GM12878 (cell line): ENCODE measurements at regions of chr6 and their contacts with region 1.

Region 1: GRCh38 chr6:83067448-83068413 is at the start of gene DOP1A:
- DNase-seq: peak; percentile 85
- ATAC-seq: peak; percentile 86
- H3K4me3 ChIP-seq: peak within 1 kb of the TSS; percentile 87
- H3K27ac ChIP-seq: peak within 1 kb of the TSS; percentile 71
- H3K4me1 ChIP-seq: peaks cover 8% of the 10 kb centered on the region
- H3K27me3 ChIP-seq: no peaks in the 10 kb centered on the region
- CTCF ChIP-seq: peak; percentile 93 to 99 (median 96)
- EP300 ChIP-seq: peak; percentile 26 to 44; a peak in 1 of 4 replicates
- POLR2A ChIP-seq: peak; percentile 92
- RAD21 ChIP-seq: peak; percentile 98
- polyA plus RNA-seq, gene DOP1A: 1.9 to 2.9 TPM

Region 2: GRCh38 chr6:82363351-82364086 is 704.2 kb before region 1 on chr6 and contains the start of gene TPBG:
- CTCF ChIA-PET with region 1: no interaction called
- POLR2A ChIA-PET with region 1: no interaction called
- RAD21 ChIA-PET with region 1: no interaction called
- SMC1A ChIA-PET with region 1: no interaction called
- in situ Hi-C with region 1: no loop called
- intact Hi-C with region 1: loop called (anchors 10 kb)
- DNase-seq: no peak
- ATAC-seq: peak; percentile 66
- H3K4me3 ChIP-seq: peak within 1 kb of the TSS; percentile 77
- H3K27ac ChIP-seq: no peak within 1 kb of the TSS; the same call in 1 of the 2 replicates
- H3K4me1 ChIP-seq: no peaks in the 10 kb centered on the region
- H3K27me3 ChIP-seq: peaks cover 3 to 5% of the 10 kb centered on the region in 2 experiments; a peak in 2 of 4 replicates
- CTCF ChIP-seq: peak in 2 of 3 experiments; percentile 15 to 38; a peak in 2 of 6 replicates
- EP300 ChIP-seq: no peak
- POLR2A ChIP-seq: peak; percentile 46
- RAD21 ChIP-seq: 0 out of 2 replicates have a peak, but pooled peaks have one; percentile 10
- polyA plus RNA-seq, gene TPBG: 0.06 to 0.33 TPM

Region 3: GRCh38 chr6:83132121-83132520 is 64.4 kb after region 1 on chr6:
- CTCF ChIA-PET with region 1: interaction called, 18 read pairs
- POLR2A ChIA-PET with region 1: interaction called, 3 read pairs
- RAD21 ChIA-PET with region 1: interaction called, 5 read pairs
- SMC1A ChIA-PET with region 1: interaction called, 17 read pairs
- in situ Hi-C with region 1: no loop called
- intact Hi-C with region 1: no loop called
- DNase-seq: no peak
- ATAC-seq: no peak
- H3K4me3 ChIP-seq: no peak overlapping the region
- H3K27ac ChIP-seq: no peak overlapping the region
- H3K4me1 ChIP-seq: no peaks in the 10 kb centered on the region
- H3K27me3 ChIP-seq: no peaks in the 10 kb centered on the region
- CTCF ChIP-seq: no peak
- EP300 ChIP-seq: no peak
- POLR2A ChIP-seq: no peak
- RAD21 ChIP-seq: no peak

Region 4: GRCh38 chr6:83169511-83169910 is 101.8 kb after region 1 on chr6:
- CTCF ChIA-PET with region 1: interaction called, 63 read pairs
- POLR2A ChIA-PET with region 1: interaction called, 3 read pairs
- RAD21 ChIA-PET with region 1: interaction called, 4 read pairs
- SMC1A ChIA-PET with region 1: interaction called, 9 read pairs
- in situ Hi-C with region 1: no loop called
- intact Hi-C with region 1: no loop called
- DNase-seq: no peak
- ATAC-seq: no peak
- H3K4me3 ChIP-seq: no peak overlapping the region
- H3K27ac ChIP-seq: no peak overlapping the region
- H3K4me1 ChIP-seq: no peaks in the 10 kb centered on the region
- H3K27me3 ChIP-seq: no peaks in the 10 kb centered on the region
- CTCF ChIP-seq: no peak
- EP300 ChIP-seq: no peak
- POLR2A ChIP-seq: no peak
- RAD21 ChIP-seq: no peak

Region 5: DNA sequence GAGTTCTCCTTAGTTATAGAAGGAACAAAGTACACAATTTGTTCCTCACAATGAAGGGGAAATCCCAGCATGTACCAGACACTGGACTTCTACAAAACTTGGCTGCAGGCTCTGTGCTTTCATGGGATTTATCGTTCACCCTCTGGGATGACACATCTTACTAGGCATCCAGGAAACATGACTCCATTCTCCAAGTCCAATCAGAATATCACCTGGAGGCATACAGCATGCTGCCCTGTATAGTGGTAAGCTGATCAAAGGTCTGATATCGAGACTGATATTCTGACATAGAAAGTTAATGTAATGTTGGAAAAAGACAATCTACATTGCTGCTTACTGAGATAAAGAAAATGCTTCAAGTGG is 132.1 kb after region 1 on chr6:
- CTCF ChIA-PET with region 1: interaction called, 195 read pairs
- POLR2A ChIA-PET with region 1: interaction called, 12 read pairs
- RAD21 ChIA-PET with region 1: interaction called, 93 read pairs
- SMC1A ChIA-PET with region 1: interaction called, 108 read pairs
- in situ Hi-C with region 1: no loop called
- intact Hi-C with region 1: no loop called
- DNase-seq: no peak
- ATAC-seq: no peak
- H3K4me3 ChIP-seq: no peak overlapping the region
- H3K27ac ChIP-seq: no peak overlapping the region
- H3K4me1 ChIP-seq: no peaks in the 10 kb centered on the region; the same call in 1 of the 2 replicates
- H3K27me3 ChIP-seq: no peaks in the 10 kb centered on the region
- CTCF ChIP-seq: no peak
- EP300 ChIP-seq: no peak
- POLR2A ChIP-seq: no peak
- RAD21 ChIP-seq: no peak

Region 6: DNA sequence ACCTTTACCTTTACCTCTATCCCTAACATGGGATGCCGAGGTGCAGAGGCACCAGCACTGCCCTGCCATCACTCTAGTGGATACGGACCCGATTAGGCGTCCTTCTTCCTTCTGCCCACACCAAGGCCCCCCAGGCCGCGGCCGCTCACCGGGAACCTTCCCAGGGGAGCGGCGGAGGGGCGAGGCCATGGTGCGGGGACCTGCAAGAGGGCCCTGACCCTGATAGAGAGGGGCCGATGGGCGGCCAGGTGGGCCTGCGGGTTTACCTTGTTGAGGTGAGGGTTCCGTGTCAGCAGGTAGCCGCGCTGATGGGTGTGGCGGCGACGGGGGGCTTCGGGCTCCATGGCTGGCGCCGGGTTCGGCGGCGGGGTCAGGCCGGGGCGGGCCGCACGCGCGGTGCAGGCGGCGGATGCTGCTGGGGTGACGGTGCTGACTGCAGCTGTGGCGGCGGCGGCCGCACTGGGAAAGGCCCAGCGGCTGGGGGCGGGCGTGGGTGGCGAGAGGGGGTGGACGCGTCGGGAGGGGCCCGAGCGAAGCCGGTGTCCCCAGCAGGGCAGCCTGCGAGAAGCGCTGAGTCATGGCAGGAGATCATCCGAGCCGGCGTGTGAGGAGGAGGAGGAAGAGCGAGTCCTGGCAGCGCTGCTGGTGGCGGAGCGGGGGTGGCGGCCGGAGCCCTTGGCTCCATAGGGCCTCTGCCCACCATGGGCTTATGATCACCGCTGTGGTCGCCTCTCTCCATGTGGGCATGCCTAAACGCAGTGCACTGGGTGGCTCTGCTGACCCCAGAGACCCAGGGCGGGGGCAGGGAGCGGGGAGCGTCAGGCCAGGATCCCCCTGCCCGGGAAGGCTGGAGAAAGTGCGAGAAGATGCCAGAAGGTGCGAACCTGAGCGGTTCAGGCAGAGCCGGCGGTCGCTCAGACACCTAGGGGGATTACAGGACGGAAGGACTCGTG is 363.2 kb after region 1 on chr6 and contains the start of gene ME1:
- CTCF ChIA-PET with region 1: interaction called, 4 read pairs
- POLR2A ChIA-PET with region 1: no interaction called
- RAD21 ChIA-PET with region 1: no interaction called
- SMC1A ChIA-PET with region 1: interaction called, 15 read pairs
- in situ Hi-C with region 1: loop called (anchors 10 kb)
- intact Hi-C with region 1: loop called (anchors 5 kb)
- DNase-seq: peak; percentile 52
- ATAC-seq: peak; percentile 91
- H3K4me3 ChIP-seq: peak within 1 kb of the TSS; percentile 65
- H3K27ac ChIP-seq: peak within 1 kb of the TSS; percentile 80
- H3K4me1 ChIP-seq: peaks cover 5% of the 10 kb centered on the region
- H3K27me3 ChIP-seq: no peaks in the 10 kb centered on the region
- CTCF ChIP-seq: no peak
- EP300 ChIP-seq: 0 out of 4 replicates have a peak, but pooled peaks of 1 of the 2 experiments have one; percentile 18
- POLR2A ChIP-seq: peak; percentile 79
- RAD21 ChIP-seq: no peak
- polyA plus RNA-seq, gene ME1: 3.6 to 6.4 TPM